Breast epithelium (tissue), 4 donors: ENCODE measurements at regions of chr16 and their contacts with region 1.

Region 1: GRCh38 chr16:26956880-26957279 is 109.8 kb upstream of the C16orf82 start:
- DNase-seq: no peak
- H3K4me3 ChIP-seq: no peak overlapping the region
- H3K27ac ChIP-seq: no peak overlapping the region
- H3K4me1 ChIP-seq: no peaks in the 10 kb centered on the region
- H3K27me3 ChIP-seq: peaks cover 0 to under 1% of the 10 kb centered on the region in 2 donors
- CTCF ChIP-seq: no peak
- POLR2A ChIP-seq: no peak

Region 2: DNA sequence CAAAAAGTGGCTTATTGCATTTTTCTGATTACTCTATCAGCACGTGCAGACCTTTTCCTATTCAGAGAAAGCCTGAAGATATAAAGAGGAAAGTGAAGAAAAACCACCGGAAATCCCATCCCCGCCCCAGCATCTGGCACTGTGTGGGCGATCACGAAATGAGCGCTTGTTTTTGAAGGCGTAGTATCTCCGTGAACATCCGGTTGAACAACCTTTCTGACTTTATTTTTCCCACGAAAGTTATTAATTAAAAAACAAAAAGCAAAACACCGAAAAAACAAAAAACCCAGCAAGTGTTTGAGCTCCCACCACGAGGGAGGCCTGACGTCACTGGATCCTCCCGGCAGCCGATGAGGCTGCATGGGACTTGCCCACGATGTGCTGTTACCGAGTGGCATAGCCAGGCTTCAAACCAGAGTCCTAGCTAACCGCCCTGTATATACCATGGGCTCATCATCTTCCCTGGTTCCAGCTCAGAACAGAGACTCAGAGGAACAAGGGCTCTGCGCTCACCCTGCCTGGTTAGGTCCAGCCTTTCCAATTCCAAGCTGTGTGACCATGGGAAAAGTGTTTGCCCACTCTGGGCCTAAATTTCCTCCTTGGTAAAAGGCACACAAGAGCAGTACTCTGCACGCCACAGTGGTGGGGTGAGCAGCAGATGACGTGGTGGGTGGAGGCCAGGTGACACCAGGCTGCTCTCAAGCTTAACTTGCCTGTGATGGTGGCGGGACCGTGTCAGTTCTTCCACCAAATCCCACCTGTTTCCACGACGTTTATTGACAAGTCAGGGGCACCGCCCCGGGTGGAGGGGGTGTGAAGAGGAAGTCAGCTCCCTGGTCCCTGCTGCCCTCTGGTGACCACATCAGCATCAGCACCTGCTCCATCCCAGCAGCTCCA is 410.8 kb after region 1 on chr16:
- intact Hi-C with region 1: loop called (anchors 5 kb)
- DNase-seq: peak; percentile 59 to 70
- H3K4me3 ChIP-seq: peak overlapping the region; percentile 20 to 42 (median 28)
- H3K27ac ChIP-seq: peak overlapping the region; percentile 57 to 70
- H3K4me1 ChIP-seq: no peaks in the 10 kb centered on the region
- H3K27me3 ChIP-seq: no peaks in the 10 kb centered on the region
- CTCF ChIP-seq: peak in 2 of 3 donors; percentile 69 to 71
- POLR2A ChIP-seq: no peak